Naive thymus-derived CD8-positive, alpha-beta T cell (primary cell): ENCODE measurements at regions of chr7 and their contacts with region 1.

Region 1: GRCh38 chr7:151755823-151756731 is 120.8 kb downstream of the PRKAG2 start:
- DNase-seq: peak; percentile 18 to 79 (median 54)
- ATAC-seq: peak; percentile 96 to 97
- H3K4me3 Mint-ChIP-seq: peak overlapping the region; percentile 72 to 89 (median 83)
- H3K27ac Mint-ChIP-seq: peak overlapping the region; percentile 88 to 98 (median 97)
- H3K4me1 Mint-ChIP-seq: peaks cover 23 to 41% (median 38%) of the 10 kb centered on the region in 4 donors
- H3K27me3 Mint-ChIP-seq: no peaks in the 10 kb centered on the region

Region 2: GRCh38 chr7:151631968-151632749 is 123.9 kb before region 1 on chr7:
- POLR2A ChIA-PET with region 1: interaction called, 10 read pairs
- DNase-seq: peak; percentile 81 to 90 (median 87)
- ATAC-seq: peak; percentile 84 to 85
- H3K4me3 Mint-ChIP-seq: peak overlapping the region; percentile 93 to 99 (median 96)
- H3K27ac Mint-ChIP-seq: peak overlapping the region; percentile 85 to 99 (median 96)
- H3K4me1 Mint-ChIP-seq: peaks cover 17 to 39% (median 36%) of the 10 kb centered on the region in 4 donors
- H3K27me3 Mint-ChIP-seq: no peaks in the 10 kb centered on the region

Region 3: DNA sequence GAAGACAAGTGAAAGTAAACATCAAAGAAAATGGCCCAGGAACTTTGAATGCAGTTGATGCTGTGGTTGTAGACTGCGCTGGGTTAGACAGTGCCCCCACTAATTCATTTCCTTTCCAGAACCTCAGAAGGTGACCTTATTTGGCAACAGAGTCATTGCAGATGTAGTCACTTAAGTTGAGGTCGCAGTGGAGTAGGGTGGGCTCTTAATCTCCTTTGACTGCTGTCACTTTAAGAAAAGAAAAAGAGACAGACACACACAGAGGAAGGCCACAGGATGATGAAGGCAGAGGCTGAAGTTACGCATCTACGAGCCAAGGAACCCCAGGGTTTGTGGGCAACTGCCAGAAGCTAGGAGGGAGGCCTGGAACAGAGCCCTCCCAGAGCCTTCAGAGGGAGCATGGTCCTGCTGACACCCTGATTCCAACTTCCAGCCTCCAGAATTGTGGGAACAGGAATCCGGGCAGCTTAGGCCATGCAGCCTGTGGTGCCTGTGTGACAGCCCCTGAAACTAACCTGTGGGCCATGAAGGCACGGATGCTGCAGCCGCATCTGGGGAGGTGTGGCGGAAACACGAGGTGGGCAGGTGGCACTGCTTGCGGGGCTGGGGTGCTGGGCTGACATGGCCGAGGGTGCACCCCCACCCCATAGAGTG is 13.2 kb after region 1 on chr7:
- POLR2A ChIA-PET with region 1: interaction called, 10 read pairs
- DNase-seq: peak in 9 of 10 donors; percentile 23 to 88 (median 76)
- ATAC-seq: peak; percentile 90 to 92
- H3K4me3 Mint-ChIP-seq: peak overlapping the region; percentile 69 to 95 (median 86)
- H3K27ac Mint-ChIP-seq: peak overlapping the region; percentile 90 to 99 (median 98)
- H3K4me1 Mint-ChIP-seq: peaks cover 46 to 91% (median 74%) of the 10 kb centered on the region in 4 donors
- H3K27me3 Mint-ChIP-seq: no peaks in the 10 kb centered on the region

Region 4: DNA sequence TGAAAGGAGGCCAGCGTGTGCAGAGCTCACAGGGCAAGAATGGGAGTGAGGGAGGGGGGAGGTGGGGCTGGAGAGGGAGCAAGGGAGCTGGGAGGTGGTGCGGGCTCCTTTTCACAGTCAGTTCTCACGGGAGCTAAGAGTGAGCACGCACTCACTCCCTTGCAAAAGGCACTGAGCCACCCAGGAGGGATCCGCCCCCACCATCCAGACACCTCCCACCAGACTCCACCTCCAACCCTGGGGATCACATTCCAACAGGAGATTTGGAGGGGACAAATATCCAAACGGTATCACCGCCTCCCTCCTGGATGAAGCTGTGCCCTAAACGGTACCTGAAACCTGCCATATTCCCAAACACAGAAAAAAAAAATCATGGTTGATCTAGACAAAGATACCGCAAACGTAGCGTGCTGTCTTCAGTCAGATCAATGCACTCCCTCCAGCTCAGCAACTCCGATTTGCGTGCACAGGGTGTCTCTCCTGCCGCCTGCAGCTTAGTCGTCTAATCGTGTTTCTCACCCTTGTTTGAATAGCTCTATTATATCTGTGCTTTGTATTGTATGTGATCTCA is 141.2 kb after region 1 on chr7:
- POLR2A ChIA-PET with region 1: no interaction called
- DNase-seq: no peak
- ATAC-seq: no peak
- H3K4me3 Mint-ChIP-seq: no peak overlapping the region
- H3K27ac Mint-ChIP-seq: peak overlapping the region in 1 of 10 donors; percentile 35
- H3K4me1 Mint-ChIP-seq: no peaks in the 10 kb centered on the region
- H3K27me3 Mint-ChIP-seq: peaks cover 4 to 39% (median 18%) of the 10 kb centered on the region in 5 donors